Dorsolateral prefrontal cortex (tissue), 120 donors: ENCODE measurements at regions of chr6 and their contacts with region 1.

Region 1: DNA sequence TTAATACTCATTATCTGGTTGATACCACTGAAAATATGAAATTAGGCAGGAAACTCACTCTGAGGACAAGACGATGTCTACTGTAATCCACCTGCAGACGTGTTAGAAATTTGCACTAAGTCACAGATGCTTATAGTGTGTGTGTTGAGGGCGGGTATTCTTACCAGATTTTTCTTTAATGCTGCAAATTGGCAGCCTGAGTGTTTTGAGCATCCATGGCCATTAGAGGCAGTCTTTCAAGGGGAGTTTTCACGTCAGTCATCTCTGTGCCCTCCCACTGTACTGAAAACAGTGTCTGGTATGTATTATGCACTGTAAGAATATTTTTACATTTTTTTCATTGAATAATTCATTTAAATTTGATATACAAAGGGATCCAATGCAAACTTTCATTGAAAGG is 266.5 kb upstream of the QKI start:
- DNase-seq: peak in 1 of 10 donors; percentile 34
- H3K4me3 ChIP-seq: peak overlapping the region in 45 of 59 donors; percentile 1 to 67 (median 33)
- H3K27ac ChIP-seq: peak overlapping the region in 58 of 59 donors; percentile 60 to 98 (median 91)
- H3K27me3 ChIP-seq: no peaks in the 10 kb centered on the region
- CTCF ChIP-seq: peak in 41 of 56 donors; percentile 6 to 51 (median 32)

Region 2: GRCh38 chr6:163098827-163099479 is 49.0 kb before region 1 on chr6:
- intact Hi-C with region 1: loop called in 1 of 2 experiments (anchors 10 kb)
- DNase-seq: peak in 1 of 10 donors; percentile 72
- H3K4me3 ChIP-seq: peak overlapping the region in 14 of 59 donors; percentile 12 to 44 (median 29)
- H3K27ac ChIP-seq: peak overlapping the region in 32 of 59 donors; percentile 3 to 75 (median 48)
- H3K27me3 ChIP-seq: no peaks in the 10 kb centered on the region
- CTCF ChIP-seq: no peak

Region 3: GRCh38 chr6:163191704-163192537 is 43.9 kb after region 1 on chr6:
- intact Hi-C with region 1: no loop called
- DNase-seq: no peak
- H3K4me3 ChIP-seq: peak overlapping the region in 2 of 59 donors; percentile 8 to 26
- H3K27ac ChIP-seq: peak overlapping the region; percentile 72 to 100 (median 97)
- H3K27me3 ChIP-seq: no peaks in the 10 kb centered on the region
- CTCF ChIP-seq: no peak

Region 4: DNA sequence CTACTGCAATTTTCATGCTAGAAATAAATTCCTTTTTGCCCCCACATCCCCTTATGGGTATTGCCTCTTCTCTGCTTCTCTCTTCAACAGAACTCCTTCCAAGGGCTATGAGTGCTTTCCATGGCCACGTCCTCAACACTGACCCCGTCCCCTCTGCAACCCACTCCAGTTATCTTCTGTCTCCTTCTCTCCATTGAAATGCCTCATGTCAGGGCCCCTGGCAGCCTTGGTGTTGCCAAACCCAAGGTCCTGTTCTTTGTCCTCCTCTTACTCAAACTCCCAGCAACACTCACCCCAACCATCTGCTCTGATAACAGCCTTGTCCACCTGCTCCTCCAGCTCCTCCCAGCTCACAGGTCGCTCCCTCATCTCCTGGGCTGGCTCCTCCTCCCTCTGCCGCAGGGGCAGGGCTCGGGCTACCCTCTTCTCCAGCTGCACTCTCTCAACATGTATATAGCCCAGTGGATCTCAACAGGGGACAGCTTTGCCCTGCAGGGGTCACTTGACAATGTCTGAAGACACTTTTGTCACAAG is 70.4 kb after region 1 on chr6:
- intact Hi-C with region 1: no loop called
- DNase-seq: no peak
- H3K4me3 ChIP-seq: no peak overlapping the region
- H3K27ac ChIP-seq: no peak overlapping the region
- H3K27me3 ChIP-seq: no peaks in the 10 kb centered on the region
- CTCF ChIP-seq: no peak